Dendritic cell treated with granulocyte-macrophage colony-stimulating factor and Interleukin-4, amounts not matched to agents 40 ng/mL and 50 ng/mL, for 4 days (primary cell): ENCODE measurements at regions of chr3 and their contacts with region 1.

Region 1: DNA sequence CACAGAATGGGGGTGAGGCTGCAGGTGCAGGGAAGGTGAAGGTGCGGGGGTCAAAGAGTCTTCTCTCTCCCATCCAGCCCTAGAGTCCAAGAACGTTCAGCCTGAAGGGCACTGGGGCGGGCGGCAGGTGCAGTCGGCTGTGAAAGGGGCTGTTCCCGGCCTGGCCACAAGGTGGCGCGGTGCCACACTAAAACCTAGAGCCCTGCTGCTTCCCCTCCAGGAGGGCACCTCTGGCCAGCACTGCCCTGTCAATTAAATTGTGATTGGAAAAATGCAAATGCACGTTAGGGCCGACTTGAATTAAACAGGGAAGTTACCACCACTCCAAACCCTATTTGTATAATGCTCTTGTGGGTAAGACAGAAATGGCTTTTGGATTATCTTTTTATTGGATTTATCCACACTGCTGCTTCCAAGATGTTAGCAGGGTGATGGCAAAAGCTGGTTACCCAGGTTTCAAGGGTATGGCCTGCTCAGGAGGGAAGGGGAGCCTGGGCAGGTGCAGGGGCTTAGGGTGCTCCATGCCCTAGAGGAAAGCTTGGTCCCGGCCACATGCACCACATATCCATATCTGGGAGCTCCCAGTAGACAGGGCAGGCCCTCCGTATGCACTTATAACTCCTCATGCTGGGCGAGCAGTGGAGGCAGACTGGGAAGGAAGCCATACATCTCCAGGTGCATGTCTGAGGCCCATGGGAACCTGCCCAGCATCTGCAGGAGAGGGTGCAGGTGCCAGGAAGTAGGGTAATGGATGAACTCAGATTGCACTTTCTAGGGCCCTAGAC is 119.8 kb downstream of the ADCY5 start:
- H3K4me3 Mint-ChIP-seq: no peak overlapping the region
- H3K27ac Mint-ChIP-seq: no peak overlapping the region
- H3K4me1 Mint-ChIP-seq: peaks cover 17% of the 10 kb centered on the region
- H3K27me3 Mint-ChIP-seq: peaks cover 7% of the 10 kb centered on the region

Region 2: DNA sequence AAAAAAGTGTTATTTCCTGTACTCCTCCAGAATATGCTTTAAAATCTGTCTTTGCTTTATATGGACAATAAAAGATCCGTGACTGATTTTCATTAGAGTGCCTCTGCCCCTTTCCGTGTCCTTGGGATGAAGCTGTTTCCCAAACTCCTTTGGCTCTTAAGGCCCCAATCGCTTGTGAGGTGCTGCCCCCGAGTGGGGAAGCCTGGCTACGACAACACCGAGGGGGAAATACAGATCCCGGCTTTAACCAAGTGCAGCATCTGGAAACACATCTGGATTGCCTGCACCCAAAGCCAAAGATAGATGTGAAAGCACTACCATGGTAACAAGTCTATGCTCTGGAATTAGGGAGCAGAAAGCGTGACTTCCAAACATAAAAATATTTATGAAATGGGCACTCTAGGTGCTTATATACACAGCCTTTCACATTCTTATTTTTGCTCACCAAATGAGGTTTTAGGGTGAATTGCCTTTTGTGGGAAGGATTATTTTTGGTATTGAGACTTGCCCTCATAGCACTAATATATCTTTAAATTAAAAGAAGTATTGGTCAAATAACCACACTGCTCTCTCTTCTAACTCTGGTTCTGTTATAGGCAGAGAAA is 160.5 kb after region 1 on chr3:
- intact Hi-C with region 1: loop called (anchors 1 kb)
- H3K4me3 Mint-ChIP-seq: no peak overlapping the region
- H3K27ac Mint-ChIP-seq: no peak overlapping the region
- H3K4me1 Mint-ChIP-seq: peaks cover 6% of the 10 kb centered on the region
- H3K27me3 Mint-ChIP-seq: peaks cover 3% of the 10 kb centered on the region

Region 3: GRCh38 chr3:123559040-123559861 is 230.2 kb after region 1 on chr3:
- intact Hi-C with region 1: loop called (anchors 1 kb)
- H3K4me3 Mint-ChIP-seq: no peak overlapping the region
- H3K27ac Mint-ChIP-seq: no peak overlapping the region
- H3K4me1 Mint-ChIP-seq: peaks cover 14% of the 10 kb centered on the region
- H3K27me3 Mint-ChIP-seq: no peaks in the 10 kb centered on the region